Mammary epithelial cell (primary cell): ENCODE measurements at regions of chr6 and their contacts with region 1.

Region 1: GRCh38 chr6:37667050-37667814 is 30.5 kb downstream of the MDGA1 start:
- DNase-seq: no peak
- H3K4me3 ChIP-seq: no peak overlapping the region
- H3K27ac ChIP-seq: no peak overlapping the region
- H3K4me1 ChIP-seq: no peaks in the 10 kb centered on the region
- H3K27me3 ChIP-seq: no peaks in the 10 kb centered on the region
- CTCF ChIP-seq: no peak

Region 2: GRCh38 chr6:37556881-37557644 is 110.2 kb before region 1 on chr6:
- CTCF ChIA-PET with region 1: no interaction called
- dilution Hi-C with region 1: loop called (anchors 5 kb)
- in situ Hi-C with region 1: no loop called
- intact Hi-C with region 1: no loop called
- DNase-seq: no peak
- H3K4me3 ChIP-seq: no peak overlapping the region
- H3K27ac ChIP-seq: no peak overlapping the region
- H3K4me1 ChIP-seq: peaks cover 29% of the 10 kb centered on the region
- H3K27me3 ChIP-seq: no peaks in the 10 kb centered on the region
- CTCF ChIP-seq: no peak

Region 3: GRCh38 chr6:37602346-37602745 is 64.9 kb before region 1 on chr6:
- CTCF ChIA-PET with region 1: no interaction called
- dilution Hi-C with region 1: loop called (anchors 5 kb)
- in situ Hi-C with region 1: no loop called
- intact Hi-C with region 1: no loop called
- DNase-seq: no peak
- H3K4me3 ChIP-seq: no peak overlapping the region
- H3K27ac ChIP-seq: no peak overlapping the region
- H3K4me1 ChIP-seq: no peaks in the 10 kb centered on the region
- H3K27me3 ChIP-seq: no peaks in the 10 kb centered on the region
- CTCF ChIP-seq: no peak

Region 4: DNA sequence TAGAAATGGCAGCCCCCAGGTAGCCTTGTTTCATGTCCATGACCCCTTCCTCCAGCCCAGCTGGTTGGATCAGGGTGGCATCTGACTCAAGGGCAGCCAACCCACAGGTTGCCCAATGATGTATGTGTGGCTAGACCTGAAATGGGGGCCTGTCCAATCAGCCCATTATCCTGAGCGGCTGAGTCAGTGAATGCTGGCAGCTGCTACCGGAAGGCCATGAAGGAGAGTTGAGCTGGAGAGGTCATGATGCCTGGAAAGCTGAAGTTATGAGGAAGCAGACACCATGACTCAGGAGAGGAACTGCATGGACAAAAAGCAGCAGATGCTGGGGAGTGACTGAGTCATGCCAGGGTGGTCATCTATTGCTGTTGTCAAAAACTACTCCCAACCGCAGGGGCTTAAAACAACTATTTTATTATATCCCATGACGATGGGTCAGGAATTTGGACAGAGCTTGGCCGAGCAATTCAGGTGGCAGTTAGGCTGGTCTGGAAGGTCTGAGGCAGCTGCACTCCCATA is 36.9 kb before region 1 on chr6:
- CTCF ChIA-PET with region 1: no interaction called
- dilution Hi-C with region 1: no loop called
- in situ Hi-C with region 1: no loop called
- intact Hi-C with region 1: no loop called
- DNase-seq: peak; percentile 99
- H3K4me3 ChIP-seq: no peak overlapping the region
- H3K27ac ChIP-seq: peak overlapping the region; percentile 57
- H3K4me1 ChIP-seq: peaks cover 20% of the 10 kb centered on the region
- H3K27me3 ChIP-seq: no peaks in the 10 kb centered on the region
- CTCF ChIP-seq: no peak

Region 5: GRCh38 chr6:37679539-37680476 is 12.6 kb after region 1 on chr6:
- CTCF ChIA-PET with region 1: no interaction called
- dilution Hi-C with region 1: no loop called
- in situ Hi-C with region 1: no loop called
- intact Hi-C with region 1: no loop called
- DNase-seq: no peak
- H3K4me3 ChIP-seq: no peak overlapping the region
- H3K27ac ChIP-seq: no peak overlapping the region
- H3K4me1 ChIP-seq: no peaks in the 10 kb centered on the region
- H3K27me3 ChIP-seq: no peaks in the 10 kb centered on the region
- CTCF ChIP-seq: no peak

Region 6: DNA sequence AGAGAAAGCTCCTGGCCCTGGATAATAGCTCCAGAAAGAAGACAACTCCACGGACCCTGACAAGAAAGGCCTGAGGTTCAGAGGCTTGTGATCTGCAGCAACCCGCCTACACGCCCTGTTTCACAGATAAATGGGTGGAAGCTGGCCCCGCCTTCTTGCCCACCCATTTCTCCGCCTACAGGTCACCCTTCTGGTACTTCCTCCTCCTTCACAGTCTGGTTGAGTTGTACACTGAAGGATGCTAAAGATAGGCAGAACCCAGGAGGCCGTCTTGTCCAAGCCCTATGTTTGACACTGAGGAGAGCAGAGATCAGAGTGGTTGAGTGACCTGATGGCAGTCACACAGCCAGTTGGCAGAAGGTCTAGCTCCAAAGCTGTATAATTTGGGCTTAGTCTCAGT is 64.7 kb after region 1 on chr6:
- CTCF ChIA-PET with region 1: no interaction called
- dilution Hi-C with region 1: loop called (anchors 5 kb)
- in situ Hi-C with region 1: no loop called
- intact Hi-C with region 1: no loop called
- DNase-seq: no peak
- H3K4me3 ChIP-seq: no peak overlapping the region
- H3K27ac ChIP-seq: no peak overlapping the region
- H3K4me1 ChIP-seq: no peaks in the 10 kb centered on the region
- H3K27me3 ChIP-seq: no peaks in the 10 kb centered on the region
- CTCF ChIP-seq: no peak

Region 7: DNA sequence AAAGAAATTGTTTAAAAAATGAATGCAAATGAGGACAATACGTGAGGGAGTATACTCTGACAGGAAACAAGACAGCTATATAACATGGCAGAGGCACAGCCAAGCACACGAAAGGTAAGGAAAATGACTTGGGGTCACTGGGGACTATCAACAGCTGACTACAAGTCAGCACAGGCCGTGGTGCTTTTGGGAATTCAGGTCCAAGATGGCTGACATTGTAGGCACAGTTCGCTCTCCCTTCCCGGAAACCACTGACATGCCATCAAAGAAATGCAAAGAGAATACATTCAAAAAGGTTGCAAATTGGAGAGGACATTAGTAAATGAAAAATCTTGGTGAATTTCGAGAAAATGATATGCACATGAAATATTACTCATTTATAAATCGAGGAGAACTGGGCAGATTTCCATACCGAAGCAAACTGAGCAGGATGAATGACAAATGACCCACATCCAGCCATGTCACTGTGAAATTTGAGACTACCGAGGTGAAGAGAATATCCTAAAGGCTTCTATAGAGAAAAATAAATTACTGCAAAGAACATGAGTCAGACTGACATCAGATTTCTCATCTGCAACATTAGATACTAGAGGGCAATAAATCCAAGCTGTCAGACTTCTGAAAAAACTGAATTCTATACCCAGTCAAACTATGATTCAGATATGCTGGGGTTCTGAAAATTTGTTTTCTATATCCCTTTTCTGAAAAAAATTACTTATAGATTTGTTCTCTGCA is 581.4 kb after region 1 on chr6:
- CTCF ChIA-PET with region 1: no interaction called
- dilution Hi-C with region 1: no loop called
- in situ Hi-C with region 1: no loop called
- intact Hi-C with region 1: no loop called
- DNase-seq: peak; percentile 60
- H3K4me3 ChIP-seq: no peak overlapping the region
- H3K27ac ChIP-seq: peak overlapping the region; percentile 3
- H3K4me1 ChIP-seq: peaks cover 6% of the 10 kb centered on the region
- H3K27me3 ChIP-seq: no peaks in the 10 kb centered on the region
- CTCF ChIP-seq: no peak